GM12878 (cell line): ENCODE measurements at regions of chr10 and their contacts with region 1.

Region 1: DNA sequence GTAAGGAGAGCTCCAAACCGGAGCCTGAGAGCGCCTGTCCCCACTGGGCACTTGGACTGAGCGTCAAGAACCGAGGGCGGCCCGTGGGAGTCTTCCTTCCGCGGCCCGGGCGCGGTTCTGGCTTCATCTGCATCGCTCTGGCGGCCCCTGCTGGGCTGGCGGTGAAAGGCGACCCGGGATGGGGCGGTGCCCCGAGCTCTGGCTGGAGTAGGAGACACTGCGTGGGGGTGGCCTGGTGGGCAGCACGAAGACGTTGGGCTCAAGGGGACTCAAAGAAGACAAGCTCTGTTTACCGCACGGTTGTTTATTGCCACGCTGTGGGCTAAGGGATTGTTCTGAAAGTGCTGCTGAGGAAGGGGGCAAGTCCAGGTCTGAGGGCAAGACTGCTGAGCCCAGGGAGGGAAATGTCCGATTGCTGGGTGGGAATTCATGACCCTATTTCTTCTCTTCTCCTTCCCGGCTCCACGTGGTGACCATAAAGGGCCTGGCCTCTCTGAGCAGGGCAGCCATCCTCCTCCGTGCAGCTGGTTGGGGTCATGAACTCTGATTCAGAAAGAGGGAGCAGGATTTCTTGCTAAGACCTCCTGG is 29.8 kb downstream of the PLAU start:
- DNase-seq: no peak
- ATAC-seq: peak; percentile 100
- H3K4me3 ChIP-seq: no peak overlapping the region
- H3K27ac ChIP-seq: no peak overlapping the region
- H3K4me1 ChIP-seq: no peaks in the 10 kb centered on the region
- H3K27me3 ChIP-seq: no peaks in the 10 kb centered on the region
- CTCF ChIP-seq: peak; percentile 92 to 99 (median 97)
- EP300 ChIP-seq: no peak
- POLR2A ChIP-seq: no peak
- RAD21 ChIP-seq: peak; percentile 98

Region 2: DNA sequence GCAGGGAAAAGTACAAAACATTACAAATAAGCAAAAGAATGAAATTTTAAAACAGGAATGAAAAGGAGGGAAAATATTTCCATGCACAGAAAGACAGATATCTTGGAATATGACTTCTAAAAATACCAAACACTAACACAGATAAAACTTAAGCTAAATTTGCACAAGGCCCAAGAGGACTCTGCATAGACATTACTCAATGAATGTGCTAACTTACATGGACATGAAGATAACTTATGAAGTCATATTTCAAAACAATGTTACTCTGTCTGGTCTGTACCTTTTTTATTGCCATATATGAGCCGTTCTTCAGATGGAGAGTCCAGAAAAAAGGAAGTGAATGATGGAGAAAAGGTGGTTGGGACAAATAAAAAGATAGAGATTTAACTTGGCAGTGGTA is 492.3 kb before region 1 on chr10:
- CTCF ChIA-PET with region 1: no interaction called
- POLR2A ChIA-PET with region 1: no interaction called
- RAD21 ChIA-PET with region 1: no interaction called
- SMC1A ChIA-PET with region 1: no interaction called
- in situ Hi-C with region 1: no loop called
- intact Hi-C with region 1: no loop called
- DNase-seq: no peak
- ATAC-seq: no peak
- H3K4me3 ChIP-seq: no peak overlapping the region
- H3K27ac ChIP-seq: no peak overlapping the region
- H3K4me1 ChIP-seq: no peaks in the 10 kb centered on the region
- H3K27me3 ChIP-seq: no peaks in the 10 kb centered on the region
- CTCF ChIP-seq: no peak
- EP300 ChIP-seq: no peak
- POLR2A ChIP-seq: no peak
- RAD21 ChIP-seq: no peak

Region 3: GRCh38 chr10:73848821-73849489 is 91.8 kb before region 1 on chr10:
- CTCF ChIA-PET with region 1: interaction called, 44 read pairs
- POLR2A ChIA-PET with region 1: no interaction called
- RAD21 ChIA-PET with region 1: interaction called, 14 read pairs
- SMC1A ChIA-PET with region 1: interaction called, 18 read pairs
- in situ Hi-C with region 1: loop called (anchors 5 kb)
- intact Hi-C with region 1: loop called (anchors 1 kb)
- DNase-seq: peak; percentile 85
- ATAC-seq: peak; percentile 99
- H3K4me3 ChIP-seq: no peak overlapping the region
- H3K27ac ChIP-seq: no peak overlapping the region
- H3K4me1 ChIP-seq: peaks cover 5% of the 10 kb centered on the region; the same call in 1 of the 2 replicates
- H3K27me3 ChIP-seq: no peaks in the 10 kb centered on the region
- CTCF ChIP-seq: peak; percentile 99 to 100 (median 99); a peak in 5 of 6 replicates
- EP300 ChIP-seq: peak; percentile 93 to 97
- POLR2A ChIP-seq: no peak
- RAD21 ChIP-seq: peak; percentile 99

Region 4: DNA sequence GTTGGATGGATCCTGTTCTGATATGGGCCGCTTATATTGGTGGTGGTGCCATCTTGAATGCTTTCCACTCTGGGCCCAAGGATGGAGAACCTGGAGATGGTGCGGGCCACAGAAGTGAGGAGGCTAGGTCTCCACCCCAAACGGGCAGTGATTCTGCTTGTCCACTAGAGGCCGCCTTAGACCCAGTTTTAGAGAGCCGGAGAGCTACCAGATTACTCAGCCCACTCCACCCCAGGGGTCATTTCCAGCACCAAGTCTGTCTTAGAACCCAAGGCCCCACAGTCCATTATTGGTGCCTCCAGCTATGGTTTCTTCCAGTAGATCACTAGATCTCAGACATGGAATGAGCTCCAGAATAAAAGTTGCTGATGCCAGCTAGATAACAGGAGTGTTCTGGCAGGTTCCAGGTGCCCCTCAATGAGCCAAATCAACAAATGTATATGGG is 54.6 kb before region 1 on chr10:
- CTCF ChIA-PET with region 1: interaction called, 930 read pairs
- POLR2A ChIA-PET with region 1: interaction called, 32 read pairs
- RAD21 ChIA-PET with region 1: interaction called, 616 read pairs
- SMC1A ChIA-PET with region 1: interaction called, 1,048 read pairs
- in situ Hi-C with region 1: loop called (anchors 5 kb)
- intact Hi-C with region 1: loop called (anchors 1 kb)
- DNase-seq: no peak
- ATAC-seq: peak; percentile 93
- H3K4me3 ChIP-seq: no peak overlapping the region
- H3K27ac ChIP-seq: no peak overlapping the region
- H3K4me1 ChIP-seq: peaks cover 6% of the 10 kb centered on the region
- H3K27me3 ChIP-seq: no peaks in the 10 kb centered on the region
- CTCF ChIP-seq: peak; percentile 89 to 94 (median 90)
- EP300 ChIP-seq: no peak
- POLR2A ChIP-seq: no peak
- RAD21 ChIP-seq: peak; percentile 94

Region 5: DNA sequence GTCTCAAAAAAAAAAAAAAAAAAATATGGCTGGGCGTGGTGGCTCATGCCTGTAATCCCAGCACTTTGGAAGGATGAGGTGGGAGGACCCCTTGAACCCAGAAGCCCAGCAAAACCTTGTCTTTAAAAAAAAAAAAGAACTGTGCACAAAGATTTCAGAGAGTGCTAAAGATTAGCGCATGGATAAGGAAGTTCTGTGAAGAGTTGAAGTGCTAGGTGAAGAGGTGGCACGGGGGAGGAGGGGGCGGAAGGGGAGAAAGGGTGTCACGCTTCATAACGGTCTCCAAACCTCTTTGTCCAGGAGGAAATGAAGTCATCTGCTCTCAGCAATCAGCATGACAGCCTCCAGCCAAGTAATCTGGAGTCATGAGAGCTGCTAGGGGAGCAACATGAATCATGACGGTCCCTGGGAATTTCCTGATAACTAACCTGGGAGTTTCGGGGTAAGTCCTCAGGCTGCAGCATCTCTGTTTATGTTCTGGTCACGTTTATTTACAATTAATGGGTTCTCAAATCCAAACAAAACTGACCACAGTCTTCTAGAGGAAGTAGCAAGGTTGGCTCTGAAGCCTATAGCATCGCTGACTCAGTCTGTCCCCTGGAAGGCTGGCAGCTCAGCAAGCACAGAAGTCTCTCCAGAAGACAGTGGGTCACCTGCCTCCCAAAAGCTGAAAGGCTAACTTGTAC is 31.7 kb before region 1 on chr10:
- CTCF ChIA-PET with region 1: interaction called, 40 read pairs
- POLR2A ChIA-PET with region 1: interaction called, 3 read pairs
- RAD21 ChIA-PET with region 1: interaction called, 19 read pairs
- SMC1A ChIA-PET with region 1: interaction called, 21 read pairs
- in situ Hi-C with region 1: no loop called
- intact Hi-C with region 1: no loop called
- DNase-seq: peak; percentile 63
- ATAC-seq: peak; percentile 70
- H3K4me3 ChIP-seq: no peak overlapping the region
- H3K27ac ChIP-seq: no peak overlapping the region
- H3K4me1 ChIP-seq: peaks cover 18% of the 10 kb centered on the region
- H3K27me3 ChIP-seq: peaks cover 0 to 7% of the 10 kb centered on the region in 2 experiments; a peak in 3 of 4 replicates
- CTCF ChIP-seq: no peak
- EP300 ChIP-seq: peak; percentile 21 to 37; a peak in 1 of 4 replicates
- POLR2A ChIP-seq: no peak
- RAD21 ChIP-seq: no peak

Region 6: GRCh38 chr10:73956476-73957359 is 16.0 kb after region 1 on chr10:
- CTCF ChIA-PET with region 1: interaction called, 23 read pairs
- POLR2A ChIA-PET with region 1: interaction called, 3 read pairs
- RAD21 ChIA-PET with region 1: interaction called, 16 read pairs
- SMC1A ChIA-PET with region 1: interaction called, 28 read pairs
- in situ Hi-C with region 1: no loop called
- intact Hi-C with region 1: no loop called
- DNase-seq: peak; percentile 66
- ATAC-seq: peak; percentile 72
- H3K4me3 ChIP-seq: peak overlapping the region; percentile 55
- H3K27ac ChIP-seq: peak overlapping the region; percentile 80
- H3K4me1 ChIP-seq: peaks cover 54% of the 10 kb centered on the region
- H3K27me3 ChIP-seq: no peaks in the 10 kb centered on the region
- CTCF ChIP-seq: no peak
- EP300 ChIP-seq: peak; percentile 56 to 79
- POLR2A ChIP-seq: no peak
- RAD21 ChIP-seq: no peak

Region 7: DNA sequence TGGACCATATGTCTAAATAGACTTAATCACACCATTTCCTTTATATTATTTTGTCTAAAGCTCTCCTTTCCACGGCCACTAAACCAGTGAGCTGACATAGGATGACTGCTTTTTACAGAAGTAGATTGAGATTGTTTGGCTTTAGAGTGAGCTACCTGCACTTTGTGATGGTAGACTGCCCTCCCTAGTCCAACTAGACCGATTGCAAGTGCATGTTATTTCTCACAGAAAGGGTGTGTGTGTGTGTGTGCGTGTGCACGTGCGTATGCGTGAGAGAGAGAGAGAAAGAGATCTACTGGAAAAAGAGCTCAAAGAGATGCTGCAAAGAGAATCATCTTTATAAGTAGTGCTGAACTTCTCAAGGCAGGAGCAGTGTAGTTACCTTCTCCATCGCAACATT is 117.9 kb after region 1 on chr10:
- CTCF ChIA-PET with region 1: interaction called, 14 read pairs
- POLR2A ChIA-PET with region 1: no interaction called
- RAD21 ChIA-PET with region 1: interaction called, 4 read pairs
- SMC1A ChIA-PET with region 1: interaction called, 3 read pairs
- in situ Hi-C with region 1: no loop called
- intact Hi-C with region 1: no loop called
- DNase-seq: no peak
- ATAC-seq: peak; percentile 66
- H3K4me3 ChIP-seq: no peak overlapping the region
- H3K27ac ChIP-seq: no peak overlapping the region
- H3K4me1 ChIP-seq: peaks cover 23% of the 10 kb centered on the region
- H3K27me3 ChIP-seq: no peaks in the 10 kb centered on the region
- CTCF ChIP-seq: peak; percentile 4 to 44 (median 30); a peak in 3 of 6 replicates
- EP300 ChIP-seq: no peak
- POLR2A ChIP-seq: no peak
- RAD21 ChIP-seq: peak; percentile 77